ENCODE measurements at regions of chrX and their contacts with region 1.

Region 1: DNA sequence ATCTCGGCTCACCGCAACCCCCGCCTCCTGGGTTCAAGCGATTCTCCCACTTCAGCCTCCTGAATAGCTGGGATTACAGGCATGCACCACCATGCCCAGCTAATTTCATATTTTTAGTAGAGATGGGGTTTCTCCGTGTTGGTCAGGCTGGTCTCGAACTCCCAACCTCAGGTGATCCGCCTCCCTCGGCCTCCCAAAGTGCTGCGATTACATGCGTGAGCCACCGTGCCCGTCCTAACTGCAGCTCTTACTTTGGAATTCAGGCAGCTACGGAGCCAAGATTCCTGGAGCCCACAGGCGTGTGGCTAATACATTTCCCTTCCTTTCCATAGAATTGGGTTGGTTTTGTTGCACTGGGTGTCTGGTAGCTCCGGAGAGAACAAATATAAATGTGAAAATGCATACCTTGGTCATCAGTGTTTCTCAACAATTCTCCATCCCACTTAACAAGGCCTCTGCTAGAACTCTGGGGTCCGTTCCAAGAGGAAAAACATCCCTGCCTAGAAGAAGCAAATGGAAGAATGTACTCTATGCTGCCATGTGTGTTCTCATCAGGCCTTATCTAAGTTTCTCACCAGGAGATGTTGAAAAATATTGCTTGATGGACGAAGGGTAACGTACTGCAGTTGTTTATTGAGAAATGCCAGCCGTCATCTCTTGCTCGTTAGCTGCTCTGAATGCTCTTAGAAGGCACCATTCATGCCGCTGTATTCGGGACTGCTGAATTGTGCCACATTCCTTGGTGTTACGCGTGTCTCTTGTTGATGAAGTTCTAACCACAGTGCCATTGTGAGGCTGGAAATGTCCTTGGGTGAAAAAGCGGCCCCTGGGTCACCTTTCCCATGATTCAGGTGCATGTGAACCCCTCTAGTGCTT is 50.6 kb upstream of the CD99 start:
- DNase-seq: no peak
- ATAC-seq: no peak
- H3K4me3 ChIP-seq: no peak overlapping the region
- H3K27ac ChIP-seq: no peak overlapping the region
- H3K4me1 ChIP-seq: no peaks in the 10 kb centered on the region
- H3K27me3 ChIP-seq: no peaks in the 10 kb centered on the region
- CTCF ChIP-seq: no peak

Region 2: DNA sequence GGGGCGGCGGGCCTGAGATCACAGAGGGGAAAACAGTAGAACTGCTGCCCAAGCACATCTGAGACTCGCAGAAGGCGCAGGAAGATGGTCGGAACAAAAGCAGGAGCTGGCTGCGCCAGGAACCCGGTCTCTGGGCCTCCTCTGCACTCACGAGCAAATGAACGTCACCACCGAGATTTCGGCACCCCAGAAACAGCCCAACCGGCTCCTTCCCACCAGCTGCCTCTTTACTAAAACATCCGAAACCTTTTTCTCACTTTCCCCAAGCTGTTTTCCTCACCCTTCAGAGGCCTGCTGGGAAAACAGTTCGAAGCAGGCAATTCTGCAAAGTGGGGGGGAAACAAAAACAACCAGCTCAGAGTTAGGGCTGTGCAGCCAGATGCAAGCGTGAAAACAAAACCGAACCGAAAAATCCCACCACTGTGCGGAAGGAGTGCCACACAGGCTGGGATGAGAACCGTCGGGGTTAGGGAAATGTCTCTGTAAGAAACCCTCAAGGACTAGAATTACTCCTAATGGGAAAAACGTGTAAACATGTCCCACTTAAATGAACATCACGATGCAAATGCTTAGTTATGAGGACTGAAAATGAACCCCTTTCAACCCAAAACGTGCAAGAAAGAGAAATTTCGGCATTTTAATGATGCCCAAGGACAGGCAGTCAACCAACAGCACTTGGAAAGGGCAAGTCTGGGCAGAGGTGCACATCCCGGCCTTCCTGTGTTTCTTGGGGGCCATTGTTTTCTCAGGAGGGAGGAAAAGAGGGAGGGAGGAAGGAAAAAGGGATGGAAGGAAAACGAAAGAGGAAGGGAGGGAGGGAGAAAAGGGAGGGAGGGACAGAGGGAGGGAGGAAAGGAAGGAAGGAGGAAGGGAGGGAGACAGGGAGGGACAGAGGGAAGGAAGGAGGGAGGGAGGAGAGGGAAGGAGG is 155.5 kb before region 1 on chrX:
- CTCF ChIA-PET with region 1: no interaction called
- POLR2A ChIA-PET with region 1: no interaction called
- intact Hi-C with region 1: no loop called
- DNase-seq: no peak
- ATAC-seq: no peak
- H3K4me3 ChIP-seq: no peak overlapping the region
- H3K27ac ChIP-seq: no peak overlapping the region
- H3K4me1 ChIP-seq: no peaks in the 10 kb centered on the region
- H3K27me3 ChIP-seq: no peaks in the 10 kb centered on the region
- CTCF ChIP-seq: no peak

Region 3: DNA sequence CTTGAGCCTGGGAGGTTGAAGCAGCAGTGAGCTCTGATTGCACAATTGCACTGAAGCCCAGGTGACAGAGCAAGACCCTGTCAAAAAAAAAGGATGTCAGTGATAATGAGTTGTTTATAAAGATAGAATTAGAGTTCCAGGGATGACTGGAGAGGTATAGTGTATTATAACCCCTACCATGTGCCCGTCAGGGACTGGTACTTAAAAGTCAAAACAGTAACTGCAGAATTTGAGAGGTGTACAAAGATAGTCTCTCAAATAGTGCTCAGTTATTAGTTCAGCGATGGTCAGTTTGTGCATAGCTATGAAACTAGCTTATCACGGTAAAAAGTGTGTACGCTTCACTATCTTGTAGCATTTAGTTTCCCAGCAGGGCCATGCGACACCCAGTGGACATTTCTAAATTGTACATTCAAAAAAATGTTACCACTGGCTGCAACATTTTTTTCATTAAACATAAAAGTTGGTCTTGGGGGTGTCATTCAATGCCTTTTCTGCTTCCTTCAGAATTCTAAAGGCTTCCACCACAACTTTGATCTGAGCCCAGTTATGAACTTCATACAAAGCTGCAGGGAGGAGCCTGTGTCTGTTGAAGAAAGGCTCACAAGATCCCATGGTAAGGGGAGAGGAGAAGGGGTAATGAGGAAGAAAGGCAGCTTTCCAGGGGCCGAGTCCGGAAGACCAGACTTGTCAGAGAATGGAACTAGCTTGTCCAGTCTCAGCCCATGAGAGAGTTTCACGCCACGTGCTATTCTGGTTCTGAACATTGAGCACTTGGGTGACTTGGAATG is 179.0 kb after region 1 on chrX:
- CTCF ChIA-PET with region 1: no interaction called
- POLR2A ChIA-PET with region 1: no interaction called
- intact Hi-C with region 1: loop called (anchors 1 kb)
- DNase-seq: peak; percentile 64
- ATAC-seq: peak; percentile 64
- H3K4me3 ChIP-seq: peak overlapping the region; percentile 31; the same call in 1 of the 2 replicates
- H3K27ac ChIP-seq: no peak overlapping the region
- H3K4me1 ChIP-seq: 0 out of 2 replicates have a peak, but pooled peaks cover 3% of the 10 kb centered on the region
- H3K27me3 ChIP-seq: no peaks in the 10 kb centered on the region
- CTCF ChIP-seq: peak; percentile 70